Activated CD4-positive, alpha-beta T cell treated with anti-CD3 and anti-CD28 coated beads for 36 hours (primary cell): ENCODE measurements at regions of chr3 and their contacts with region 1.

Region 1: GRCh38 chr3:16884084-16884747 is 539 bp upstream of the PLCL2 start:
- DNase-seq: peak; percentile 87
- ATAC-seq: peak; percentile 61
- H3K4me3 Mint-ChIP-seq: peak overlapping the region; percentile 93
- H3K27ac Mint-ChIP-seq: peak overlapping the region; percentile 94
- H3K4me1 Mint-ChIP-seq: peaks cover 20% of the 10 kb centered on the region
- H3K27me3 Mint-ChIP-seq: no peaks in the 10 kb centered on the region

Region 2: DNA sequence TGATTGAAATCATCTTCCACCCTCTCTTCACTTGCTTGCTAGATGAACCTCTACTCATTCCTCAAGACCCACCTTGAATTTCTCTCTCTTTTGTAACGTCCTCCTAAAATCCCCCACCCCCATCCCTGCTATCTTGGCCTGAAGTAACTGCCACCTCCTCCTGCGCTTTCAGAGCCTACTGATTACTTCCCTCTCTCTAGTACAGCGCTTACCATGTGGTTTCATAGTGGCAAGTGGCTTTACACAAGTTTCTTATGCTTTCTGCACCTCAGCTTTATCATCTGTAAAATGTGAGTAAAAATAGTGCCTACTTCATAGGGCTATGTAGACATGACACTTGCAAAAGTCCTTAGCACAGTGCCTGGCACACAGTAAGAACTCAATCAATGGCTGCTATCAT is 250.3 kb before region 1 on chr3:
- CTCF ChIA-PET with region 1: no interaction called
- POLR2A ChIA-PET with region 1: no interaction called
- intact Hi-C with region 1: no loop called
- DNase-seq: no peak
- ATAC-seq: no peak
- H3K4me3 Mint-ChIP-seq: no peak overlapping the region
- H3K27ac Mint-ChIP-seq: no peak overlapping the region
- H3K4me1 Mint-ChIP-seq: no peaks in the 10 kb centered on the region
- H3K27me3 Mint-ChIP-seq: peaks cover 5% of the 10 kb centered on the region

Region 3: GRCh38 chr3:16675805-16676204 is 208.4 kb before region 1 on chr3:
- CTCF ChIA-PET with region 1: no interaction called
- POLR2A ChIA-PET with region 1: no interaction called
- intact Hi-C with region 1: no loop called
- DNase-seq: no peak
- ATAC-seq: no peak
- H3K4me3 Mint-ChIP-seq: no peak overlapping the region
- H3K27ac Mint-ChIP-seq: no peak overlapping the region
- H3K4me1 Mint-ChIP-seq: no peaks in the 10 kb centered on the region
- H3K27me3 Mint-ChIP-seq: peaks cover 4% of the 10 kb centered on the region

Region 4: DNA sequence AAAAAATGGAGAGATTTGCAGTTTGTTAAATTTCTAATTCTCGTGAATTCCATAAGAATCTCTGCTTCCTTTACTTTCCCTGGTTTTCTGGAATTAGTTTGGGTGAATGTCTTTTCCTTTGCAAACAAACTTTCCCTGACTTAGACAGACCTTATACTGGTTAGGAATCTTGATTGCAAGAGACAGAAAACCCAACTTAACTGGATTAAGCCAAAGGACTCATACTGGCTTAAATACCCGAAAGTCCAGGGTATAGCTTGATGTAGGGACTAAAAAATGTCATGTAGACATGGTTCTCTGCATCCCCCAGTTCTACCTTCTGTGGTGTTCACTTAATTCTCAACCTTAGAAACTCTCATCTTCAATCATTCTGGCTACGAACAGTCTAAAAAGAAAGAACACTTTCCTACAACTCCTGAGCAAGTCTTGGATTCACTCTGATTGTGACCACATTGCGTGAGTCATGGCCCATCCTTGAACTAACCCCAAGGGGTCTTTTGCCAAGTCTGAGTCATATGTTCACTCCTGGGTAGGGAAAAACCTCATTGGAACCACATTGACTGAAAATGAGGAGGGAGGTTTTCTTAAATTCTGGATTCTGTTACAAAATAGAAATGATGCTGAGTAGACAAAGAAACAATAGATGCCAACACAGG is 143.0 kb before region 1 on chr3:
- CTCF ChIA-PET with region 1: interaction called, 3 read pairs
- POLR2A ChIA-PET with region 1: no interaction called
- intact Hi-C with region 1: loop called in 1 of 2 experiments (anchors 5 kb)
- DNase-seq: peak; percentile 65
- ATAC-seq: peak; percentile 79
- H3K4me3 Mint-ChIP-seq: no peak overlapping the region
- H3K27ac Mint-ChIP-seq: no peak overlapping the region
- H3K4me1 Mint-ChIP-seq: peaks cover 12% of the 10 kb centered on the region
- H3K27me3 Mint-ChIP-seq: peaks cover 2% of the 10 kb centered on the region

Region 5: GRCh38 chr3:16871915-16872842 is 12.0 kb before region 1 on chr3:
- CTCF ChIA-PET with region 1: interaction called, 11 read pairs
- POLR2A ChIA-PET with region 1: no interaction called
- intact Hi-C with region 1: no loop called
- DNase-seq: no peak
- ATAC-seq: no peak
- H3K4me3 Mint-ChIP-seq: no peak overlapping the region
- H3K27ac Mint-ChIP-seq: no peak overlapping the region
- H3K4me1 Mint-ChIP-seq: peaks cover under 1% of the 10 kb centered on the region
- H3K27me3 Mint-ChIP-seq: peaks cover 3% of the 10 kb centered on the region

Region 6: GRCh38 chr3:16912400-16913263 is 28.4 kb after region 1 on chr3:
- CTCF ChIA-PET with region 1: interaction called, 3 read pairs
- POLR2A ChIA-PET with region 1: no interaction called
- intact Hi-C with region 1: loop called in 1 of 2 experiments (anchors 2 kb)
- DNase-seq: no peak
- ATAC-seq: peak; percentile 66
- H3K4me3 Mint-ChIP-seq: no peak overlapping the region
- H3K27ac Mint-ChIP-seq: peak overlapping the region; percentile 55
- H3K4me1 Mint-ChIP-seq: peaks cover 73% of the 10 kb centered on the region
- H3K27me3 Mint-ChIP-seq: no peaks in the 10 kb centered on the region

Region 7: GRCh38 chr3:17151598-17152373 is 267.6 kb after region 1 on chr3:
- CTCF ChIA-PET with region 1: interaction called, 3 read pairs
- POLR2A ChIA-PET with region 1: interaction called, 5 read pairs
- intact Hi-C with region 1: loop called (anchors 1 to 2 kb)
- DNase-seq: peak; percentile 94
- ATAC-seq: peak; percentile 94
- H3K4me3 Mint-ChIP-seq: peak overlapping the region; percentile 52
- H3K27ac Mint-ChIP-seq: peak overlapping the region; percentile 88
- H3K4me1 Mint-ChIP-seq: peaks cover 29% of the 10 kb centered on the region
- H3K27me3 Mint-ChIP-seq: no peaks in the 10 kb centered on the region

Region 8: GRCh38 chr3:17623464-17623863 is 739.2 kb after region 1 on chr3:
- CTCF ChIA-PET with region 1: no interaction called
- POLR2A ChIA-PET with region 1: no interaction called
- intact Hi-C with region 1: no loop called
- DNase-seq: no peak
- ATAC-seq: no peak
- H3K4me3 Mint-ChIP-seq: no peak overlapping the region
- H3K27ac Mint-ChIP-seq: no peak overlapping the region
- H3K4me1 Mint-ChIP-seq: peaks cover 9% of the 10 kb centered on the region
- H3K27me3 Mint-ChIP-seq: no peaks in the 10 kb centered on the region

Region 9: GRCh38 chr3:17742108-17742879 is 858.1 kb after region 1 on chr3 and contains the start of gene TBC1D5:
- CTCF ChIA-PET with region 1: no interaction called
- POLR2A ChIA-PET with region 1: no interaction called
- intact Hi-C with region 1: loop called in 1 of 2 experiments (anchors 1 kb)
- DNase-seq: peak; percentile 97
- ATAC-seq: peak; percentile 97
- H3K4me3 Mint-ChIP-seq: peak within 1 kb of the TSS; percentile 93
- H3K27ac Mint-ChIP-seq: peak within 1 kb of the TSS; percentile 93
- H3K4me1 Mint-ChIP-seq: peaks cover 40% of the 10 kb centered on the region
- H3K27me3 Mint-ChIP-seq: no peaks in the 10 kb centered on the region
- total RNA-seq, gene TBC1D5: 53.9 to 56.9 TPM